ENCODE measurements at regions of chr5 and their contacts with region 1.

Region 1: DNA sequence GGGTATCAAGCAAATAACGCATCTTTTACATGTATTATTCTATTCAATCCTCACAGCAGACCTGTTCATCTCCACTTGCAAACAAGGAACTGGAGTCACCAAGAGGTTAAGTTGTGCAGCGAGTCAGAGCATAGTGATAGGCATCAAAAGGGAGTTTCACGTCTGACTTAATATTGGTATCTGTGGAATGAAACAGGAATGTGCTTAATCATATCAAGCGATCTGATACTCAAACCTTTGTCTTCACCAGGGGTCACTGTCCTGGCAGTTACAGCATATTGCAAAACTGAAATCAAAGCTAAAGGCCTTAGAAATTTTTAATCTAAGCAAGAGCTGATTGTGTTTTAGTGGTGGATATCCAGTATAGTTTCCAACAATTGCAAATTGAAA is 271.6 kb downstream of the PLK2 start:
- DNase-seq: peak; percentile 60 to 99
- H3K4me3 ChIP-seq: peak overlapping the region; percentile 1; the same call in 1 of the 2 replicates
- H3K27ac ChIP-seq: peak overlapping the region; percentile 94
- H3K4me1 ChIP-seq: peaks cover 80% of the 10 kb centered on the region
- H3K27me3 ChIP-seq: no peaks in the 10 kb centered on the region
- CTCF ChIP-seq: no peak

Region 2: GRCh38 chr5:57499262-57500050 is 688.8 kb before region 1 on chr5:
- CTCF ChIA-PET with region 1: no interaction called
- POLR2A ChIA-PET with region 1: no interaction called
- intact Hi-C with region 1: loop called (anchors 1 kb)
- DNase-seq: peak; percentile 50 to 84
- H3K4me3 ChIP-seq: peak overlapping the region; percentile 18; the same call in 1 of the 2 replicates
- H3K27ac ChIP-seq: peak overlapping the region; percentile 74
- H3K4me1 ChIP-seq: peaks cover 34% of the 10 kb centered on the region
- H3K27me3 ChIP-seq: no peaks in the 10 kb centered on the region
- CTCF ChIP-seq: peak; percentile 84

Region 3: DNA sequence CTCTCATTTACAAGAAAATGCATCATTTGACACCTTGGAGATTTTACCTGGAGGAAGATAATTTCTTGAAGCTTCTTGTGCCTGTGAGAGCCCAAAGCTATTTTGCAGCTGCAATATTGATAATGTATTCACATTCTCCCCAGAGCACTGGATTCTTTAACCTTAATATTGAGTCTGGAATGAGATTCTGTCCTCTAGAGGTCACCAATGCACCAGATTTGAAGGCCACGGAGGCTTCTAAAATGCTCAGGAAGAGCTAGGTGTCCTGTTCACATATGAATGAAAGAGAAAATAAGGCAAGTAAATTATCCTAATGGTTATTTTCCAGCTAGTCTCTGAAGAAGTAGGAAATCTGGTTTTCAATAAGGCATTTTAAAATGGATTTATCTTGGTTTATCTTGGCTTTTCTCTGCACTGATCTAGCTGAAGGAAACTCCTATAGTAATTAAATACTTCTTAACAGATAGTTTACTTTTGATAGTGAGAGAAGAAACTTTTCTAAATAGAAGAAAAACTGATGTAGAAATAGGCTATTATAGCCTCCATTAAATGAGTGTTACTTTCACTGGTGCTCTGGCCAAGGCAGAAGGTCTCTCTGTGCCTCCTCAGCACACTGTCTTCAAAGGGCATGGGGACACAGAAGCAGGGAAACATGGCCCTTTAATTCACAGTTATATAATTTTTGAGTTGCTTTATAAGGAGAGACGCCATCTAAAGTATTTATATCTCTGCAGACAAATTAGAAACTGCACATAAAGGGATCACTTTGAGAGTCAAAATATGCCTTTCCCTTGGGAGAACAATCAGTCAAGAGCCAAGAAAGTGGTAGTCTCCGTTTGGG is 408.7 kb before region 1 on chr5:
- CTCF ChIA-PET with region 1: interaction called, 3 read pairs
- POLR2A ChIA-PET with region 1: interaction called, 3 read pairs
- intact Hi-C with region 1: loop called (anchors 1 kb)
- DNase-seq: peak; percentile 59 to 73
- H3K4me3 ChIP-seq: no peak overlapping the region
- H3K27ac ChIP-seq: peak overlapping the region; percentile 55
- H3K4me1 ChIP-seq: peaks cover 29% of the 10 kb centered on the region
- H3K27me3 ChIP-seq: no peaks in the 10 kb centered on the region
- CTCF ChIP-seq: peak; percentile 77

Region 4: GRCh38 chr5:58019614-58020013 is 168.6 kb before region 1 on chr5:
- CTCF ChIA-PET with region 1: no interaction called
- POLR2A ChIA-PET with region 1: interaction called, 8 read pairs
- intact Hi-C with region 1: loop called (anchors 1 kb)
- DNase-seq: no peak
- H3K4me3 ChIP-seq: no peak overlapping the region
- H3K27ac ChIP-seq: no peak overlapping the region
- H3K4me1 ChIP-seq: peaks cover 46% of the 10 kb centered on the region
- H3K27me3 ChIP-seq: no peaks in the 10 kb centered on the region
- CTCF ChIP-seq: no peak

Region 5: GRCh38 chr5:58273711-58274110 is 85.5 kb after region 1 on chr5:
- CTCF ChIA-PET with region 1: no interaction called
- POLR2A ChIA-PET with region 1: interaction called, 10 read pairs
- intact Hi-C with region 1: no loop called
- DNase-seq: no peak
- H3K4me3 ChIP-seq: no peak overlapping the region
- H3K27ac ChIP-seq: no peak overlapping the region
- H3K4me1 ChIP-seq: no peaks in the 10 kb centered on the region
- H3K27me3 ChIP-seq: no peaks in the 10 kb centered on the region
- CTCF ChIP-seq: no peak

Measured in PC-9 (cell line).